Endothelial cell of umbilical vein (primary cell): ENCODE measurements at regions of chr1 and their contacts with region 1.

Region 1: GRCh38 chr1:50570066-50570468 is 146.8 kb upstream of the DMRTA2 start:
- DNase-seq: no peak
- H3K4me3 ChIP-seq: no peak overlapping the region
- H3K27ac ChIP-seq: no peak overlapping the region
- H3K4me1 ChIP-seq: no peaks in the 10 kb centered on the region
- H3K27me3 ChIP-seq: no peaks in the 10 kb centered on the region
- CTCF ChIP-seq: no peak
- POLR2A ChIP-seq: no peak

Region 2: DNA sequence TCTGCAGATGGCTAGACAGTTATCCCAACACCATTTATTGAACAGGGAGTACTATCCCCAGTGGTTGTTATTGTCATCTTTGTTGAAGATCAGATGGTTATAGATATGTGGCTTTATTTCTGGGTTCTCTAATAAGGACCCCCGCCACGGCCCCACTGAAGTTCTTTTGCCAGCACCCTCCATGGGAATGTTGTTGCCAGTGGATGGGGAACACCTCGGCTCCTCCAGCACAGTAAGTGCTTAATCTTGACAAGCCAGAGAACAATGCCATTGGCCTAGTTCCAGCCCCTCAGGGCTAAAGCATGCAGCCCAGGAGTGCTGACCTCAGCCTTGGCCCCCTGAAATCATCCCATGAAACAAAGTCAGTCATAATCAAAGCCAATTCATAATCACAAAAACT is 884.0 kb before region 1 on chr1:
- CTCF ChIA-PET with region 1: no interaction called
- POLR2A ChIA-PET with region 1: no interaction called
- dilution Hi-C with region 1: no loop called
- intact Hi-C with region 1: no loop called
- DNase-seq: no peak
- H3K4me3 ChIP-seq: no peak overlapping the region
- H3K27ac ChIP-seq: no peak overlapping the region
- H3K4me1 ChIP-seq: no peaks in the 10 kb centered on the region
- H3K27me3 ChIP-seq: no peaks in the 10 kb centered on the region
- CTCF ChIP-seq: no peak
- POLR2A ChIP-seq: no peak

Region 3: GRCh38 chr1:50508040-50508586 is 62.0 kb before region 1 on chr1:
- CTCF ChIA-PET with region 1: no interaction called
- POLR2A ChIA-PET with region 1: no interaction called
- dilution Hi-C with region 1: no loop called
- intact Hi-C with region 1: no loop called
- DNase-seq: no peak
- H3K4me3 ChIP-seq: no peak overlapping the region
- H3K27ac ChIP-seq: no peak overlapping the region
- H3K4me1 ChIP-seq: no peaks in the 10 kb centered on the region
- H3K27me3 ChIP-seq: no peaks in the 10 kb centered on the region
- CTCF ChIP-seq: no peak
- POLR2A ChIP-seq: no peak

Region 4: DNA sequence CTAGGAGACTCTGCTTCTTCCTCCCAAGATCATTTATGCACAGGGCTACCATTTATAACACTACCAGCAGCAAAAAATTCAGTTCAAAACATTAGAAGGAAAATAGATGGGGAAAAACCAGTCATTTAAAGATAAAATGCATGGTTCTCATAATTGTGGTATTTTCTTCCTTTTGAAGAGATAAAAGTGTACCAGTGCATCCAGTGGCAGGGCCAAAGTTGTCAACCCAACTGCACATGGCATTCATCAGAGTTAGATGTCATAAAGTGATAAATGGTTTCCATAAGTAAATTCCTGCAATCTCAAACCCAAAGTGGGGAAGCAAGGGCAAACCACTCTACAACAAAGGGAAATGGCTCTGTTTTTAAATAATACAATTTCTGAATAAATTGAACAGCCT is 27.7 kb before region 1 on chr1:
- CTCF ChIA-PET with region 1: no interaction called
- POLR2A ChIA-PET with region 1: no interaction called
- dilution Hi-C with region 1: no loop called
- intact Hi-C with region 1: loop called (anchors 1 kb)
- DNase-seq: no peak
- H3K4me3 ChIP-seq: no peak overlapping the region
- H3K27ac ChIP-seq: no peak overlapping the region
- H3K4me1 ChIP-seq: no peaks in the 10 kb centered on the region
- H3K27me3 ChIP-seq: no peaks in the 10 kb centered on the region
- CTCF ChIP-seq: no peak
- POLR2A ChIP-seq: no peak

Region 5: GRCh38 chr1:50644447-50645105 is 74.5 kb after region 1 on chr1:
- CTCF ChIA-PET with region 1: no interaction called
- POLR2A ChIA-PET with region 1: no interaction called
- dilution Hi-C with region 1: no loop called
- intact Hi-C with region 1: no loop called
- DNase-seq: no peak
- H3K4me3 ChIP-seq: no peak overlapping the region
- H3K27ac ChIP-seq: no peak overlapping the region
- H3K4me1 ChIP-seq: no peaks in the 10 kb centered on the region
- H3K27me3 ChIP-seq: no peaks in the 10 kb centered on the region
- CTCF ChIP-seq: no peak
- POLR2A ChIP-seq: no peak